ENCODE measurements at regions of chr15 and their contacts with region 1.

Region 1: DNA sequence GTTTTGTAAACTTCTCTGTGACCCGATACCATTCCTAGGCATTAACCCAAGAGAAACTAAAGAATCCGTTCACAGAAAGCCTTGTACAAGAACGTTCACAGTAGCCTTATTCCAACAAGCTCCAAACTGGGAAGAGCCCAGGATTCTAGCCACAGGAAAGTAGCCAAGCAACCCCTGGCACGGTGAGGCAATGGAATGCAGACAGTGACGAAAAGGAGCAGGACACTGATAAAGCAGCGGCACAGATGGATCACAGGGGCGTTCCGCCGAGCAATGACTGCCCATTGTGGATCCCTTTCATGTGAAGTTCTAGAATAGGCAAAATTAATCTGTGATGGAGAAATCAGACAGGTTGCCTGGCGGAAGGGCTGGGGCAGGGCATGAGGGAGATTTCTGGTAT is 198.7 kb upstream of the CHRNA7 start:
- DNase-seq: peak in 3 of 5 donors; percentile 33 to 37 (median 34)
- ATAC-seq: peak; percentile 74 to 84 (median 81)
- H3K4me3 ChIP-seq: no peak overlapping the region
- H3K27ac ChIP-seq: peak overlapping the region in 3 of 12 donors; percentile 8 to 40 (median 25)
- H3K4me1 ChIP-seq: peaks cover 0 to 4% (median 0%) of the 10 kb centered on the region in 12 donors
- H3K27me3 ChIP-seq: no peaks in the 10 kb centered on the region
- CTCF ChIP-seq: no peak
- POLR2A ChIP-seq: no peak

Region 2: GRCh38 chr15:31887246-31887645 is 55.6 kb after region 1 on chr15:
- intact Hi-C with region 1: loop called in 1 of 10 experiments (anchors 10 kb)
- DNase-seq: no peak
- ATAC-seq: no peak
- H3K4me3 ChIP-seq: no peak overlapping the region
- H3K27ac ChIP-seq: no peak overlapping the region
- H3K4me1 ChIP-seq: no peaks in the 10 kb centered on the region
- H3K27me3 ChIP-seq: peaks cover 0 to 13% (median 6%) of the 10 kb centered on the region in 9 donors
- CTCF ChIP-seq: no peak
- POLR2A ChIP-seq: no peak